ENCODE measurements at regions of chr7 and their contacts with region 1.

Region 1: GRCh38 chr7:37448636-37449361 is at the start of gene ELMO1:
- DNase-seq: peak; percentile 87
- ATAC-seq: peak; percentile 85
- H3K4me3 Mint-ChIP-seq: peak within 1 kb of the TSS; percentile 92
- H3K27ac Mint-ChIP-seq: peak within 1 kb of the TSS; percentile 97
- H3K4me1 Mint-ChIP-seq: peaks cover 34% of the 10 kb centered on the region
- H3K27me3 Mint-ChIP-seq: no peaks in the 10 kb centered on the region
- CTCF ChIP-seq: peak; percentile 54
- total RNA-seq, gene ELMO1: 72.8 to 75.3 TPM

Region 2: DNA sequence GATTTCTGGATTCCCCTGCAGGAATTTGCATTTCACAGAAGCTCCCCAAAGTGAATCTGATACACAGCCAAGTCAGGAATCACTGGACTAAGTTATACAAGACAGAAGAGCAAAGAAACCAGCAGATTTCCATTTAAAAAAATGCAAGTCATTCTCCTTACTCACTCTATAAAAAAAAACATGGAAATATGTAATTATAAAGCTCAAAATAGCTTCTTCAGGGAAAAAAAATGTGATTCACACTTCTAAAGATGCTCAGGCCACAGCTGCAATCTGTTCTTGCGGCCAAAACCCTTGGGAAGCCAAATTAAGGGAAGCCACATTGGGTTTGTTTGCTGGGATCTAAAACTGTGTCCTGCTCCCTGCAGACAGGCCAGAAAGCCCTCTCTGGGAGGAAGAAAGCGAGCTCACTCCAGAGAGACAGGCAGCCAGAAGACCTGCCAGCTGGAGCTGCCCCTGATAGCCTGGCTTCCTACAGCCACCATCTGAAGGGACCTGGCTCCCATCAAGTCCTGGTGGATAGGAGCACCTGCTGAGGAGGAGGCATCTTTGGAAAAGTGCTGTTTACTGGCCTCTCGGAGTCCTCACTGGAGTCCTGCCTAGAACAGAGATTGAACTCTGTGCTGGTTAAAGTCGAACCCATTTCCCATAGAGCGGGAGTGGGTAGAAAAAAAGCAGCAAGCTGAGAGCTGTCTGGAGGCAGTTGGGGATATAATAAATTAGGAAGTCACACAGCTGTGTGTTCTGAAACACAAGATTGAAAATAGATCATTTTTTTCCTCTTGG is 365.3 kb before region 1 on chr7:
- CTCF ChIA-PET with region 1: no interaction called
- POLR2A ChIA-PET with region 1: no interaction called
- intact Hi-C with region 1: no loop called
- DNase-seq: no peak
- ATAC-seq: no peak
- H3K4me3 Mint-ChIP-seq: no peak overlapping the region
- H3K27ac Mint-ChIP-seq: no peak overlapping the region
- H3K4me1 Mint-ChIP-seq: peaks cover 35% of the 10 kb centered on the region
- H3K27me3 Mint-ChIP-seq: no peaks in the 10 kb centered on the region
- CTCF ChIP-seq: no peak

Region 3: GRCh38 chr7:37342688-37343471 is 105.9 kb before region 1 on chr7:
- CTCF ChIA-PET with region 1: interaction called, 3 read pairs
- POLR2A ChIA-PET with region 1: interaction called, 11 read pairs
- intact Hi-C with region 1: no loop called
- DNase-seq: peak; percentile 86
- ATAC-seq: peak; percentile 86
- H3K4me3 Mint-ChIP-seq: peak overlapping the region; percentile 82
- H3K27ac Mint-ChIP-seq: peak overlapping the region; percentile 99
- H3K4me1 Mint-ChIP-seq: peaks cover 55% of the 10 kb centered on the region
- H3K27me3 Mint-ChIP-seq: no peaks in the 10 kb centered on the region
- CTCF ChIP-seq: no peak

Region 4: DNA sequence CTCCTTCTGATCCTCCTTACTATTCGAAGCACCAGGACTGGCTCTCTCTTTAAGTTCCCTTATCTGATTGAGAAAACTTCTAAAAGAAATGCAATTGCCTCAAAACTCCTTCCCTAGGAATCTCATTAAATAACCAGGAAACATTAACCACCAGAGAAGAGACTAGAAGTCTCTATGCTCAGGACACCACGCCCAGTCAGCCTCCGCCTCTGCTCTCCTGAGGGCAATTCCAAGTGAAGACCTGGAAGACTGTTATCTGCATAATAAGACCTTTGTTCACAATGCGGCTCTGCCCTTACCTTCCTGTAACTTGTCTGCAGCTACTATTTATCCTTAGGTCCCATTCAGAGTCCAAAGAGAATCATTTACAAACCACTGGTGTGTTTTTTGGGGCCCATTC is 78.9 kb before region 1 on chr7:
- CTCF ChIA-PET with region 1: no interaction called
- POLR2A ChIA-PET with region 1: no interaction called
- intact Hi-C with region 1: loop called (anchors 5 kb)
- DNase-seq: no peak
- ATAC-seq: no peak
- H3K4me3 Mint-ChIP-seq: no peak overlapping the region
- H3K27ac Mint-ChIP-seq: no peak overlapping the region
- H3K4me1 Mint-ChIP-seq: peaks cover 55% of the 10 kb centered on the region
- H3K27me3 Mint-ChIP-seq: no peaks in the 10 kb centered on the region
- CTCF ChIP-seq: no peak

Region 5: GRCh38 chr7:37408291-37409228 is 40.2 kb before region 1 on chr7:
- CTCF ChIA-PET with region 1: interaction called, 4 read pairs
- POLR2A ChIA-PET with region 1: interaction called, 12 read pairs
- intact Hi-C with region 1: loop called (anchors 5 kb)
- DNase-seq: peak; percentile 31
- ATAC-seq: peak; percentile 54
- H3K4me3 Mint-ChIP-seq: peak overlapping the region; percentile 73
- H3K27ac Mint-ChIP-seq: peak overlapping the region; percentile 87
- H3K4me1 Mint-ChIP-seq: peaks cover 69% of the 10 kb centered on the region
- H3K27me3 Mint-ChIP-seq: no peaks in the 10 kb centered on the region
- CTCF ChIP-seq: no peak

Region 6: GRCh38 chr7:37549076-37549941 is 100.5 kb after region 1 on chr7:
- CTCF ChIA-PET with region 1: no interaction called
- POLR2A ChIA-PET with region 1: no interaction called
- intact Hi-C with region 1: no loop called
- DNase-seq: no peak
- ATAC-seq: no peak
- H3K4me3 Mint-ChIP-seq: no peak overlapping the region
- H3K27ac Mint-ChIP-seq: no peak overlapping the region
- H3K4me1 Mint-ChIP-seq: no peaks in the 10 kb centered on the region
- H3K27me3 Mint-ChIP-seq: peaks cover 3% of the 10 kb centered on the region
- CTCF ChIP-seq: no peak